Breast epithelium (tissue), 4 donors: ENCODE measurements at regions of chr1 and their contacts with region 1.

Region 1: DNA sequence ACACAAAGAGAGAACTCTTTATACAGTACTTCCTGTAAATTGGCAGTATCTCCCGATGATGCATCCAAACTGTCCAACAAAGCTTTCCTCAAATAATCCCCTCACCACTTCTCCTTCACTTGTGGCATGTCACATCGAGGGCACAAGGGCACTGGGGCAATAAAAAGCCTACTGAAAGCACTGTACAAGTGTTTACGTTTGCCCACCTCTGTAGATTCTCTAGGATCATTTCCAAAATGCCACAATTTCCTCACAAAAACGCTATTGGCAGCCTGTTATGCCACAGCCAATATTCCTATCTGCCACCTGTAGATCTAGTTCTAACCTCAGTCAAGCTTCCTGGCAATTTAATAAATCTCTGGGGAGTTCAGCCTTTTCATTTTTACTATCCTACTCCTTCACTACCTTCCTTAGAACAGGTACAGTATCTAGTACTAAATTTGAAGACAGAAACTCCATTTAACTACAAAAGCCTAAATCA is 39.9 kb downstream of the HNRNPR start:
- DNase-seq: no peak
- H3K4me3 ChIP-seq: no peak overlapping the region
- H3K27ac ChIP-seq: peak overlapping the region in 1 of 2 donors; percentile 6
- H3K4me1 ChIP-seq: no peaks in the 10 kb centered on the region
- H3K27me3 ChIP-seq: no peaks in the 10 kb centered on the region
- CTCF ChIP-seq: no peak
- POLR2A ChIP-seq: no peak

Region 2: DNA sequence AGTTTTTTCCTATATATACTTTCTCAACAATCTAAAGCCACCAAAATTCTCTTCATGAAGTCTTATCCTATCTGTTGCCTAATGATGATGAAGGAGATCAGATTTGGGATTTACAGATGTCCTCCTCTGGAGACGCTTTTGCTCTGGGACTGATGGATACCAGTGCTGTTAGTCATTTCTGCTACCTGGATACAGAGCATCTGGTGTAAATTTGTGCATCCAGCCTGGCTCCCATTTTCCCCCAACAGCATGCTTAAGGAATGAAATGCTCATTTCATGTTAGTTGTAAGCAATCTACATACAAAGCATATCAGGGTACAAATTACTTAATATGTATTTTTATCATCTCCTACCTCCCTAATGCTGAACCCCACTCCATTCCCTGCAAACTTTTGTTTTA is 17.8 kb before region 1 on chr1:
- intact Hi-C with region 1: loop called (anchors 2 kb)
- DNase-seq: no peak
- H3K4me3 ChIP-seq: no peak overlapping the region
- H3K27ac ChIP-seq: no peak overlapping the region
- H3K4me1 ChIP-seq: no peaks in the 10 kb centered on the region
- H3K27me3 ChIP-seq: no peaks in the 10 kb centered on the region
- CTCF ChIP-seq: no peak
- POLR2A ChIP-seq: no peak